ENCODE measurements at regions of chr12 and their contacts with region 1.

Region 1: DNA sequence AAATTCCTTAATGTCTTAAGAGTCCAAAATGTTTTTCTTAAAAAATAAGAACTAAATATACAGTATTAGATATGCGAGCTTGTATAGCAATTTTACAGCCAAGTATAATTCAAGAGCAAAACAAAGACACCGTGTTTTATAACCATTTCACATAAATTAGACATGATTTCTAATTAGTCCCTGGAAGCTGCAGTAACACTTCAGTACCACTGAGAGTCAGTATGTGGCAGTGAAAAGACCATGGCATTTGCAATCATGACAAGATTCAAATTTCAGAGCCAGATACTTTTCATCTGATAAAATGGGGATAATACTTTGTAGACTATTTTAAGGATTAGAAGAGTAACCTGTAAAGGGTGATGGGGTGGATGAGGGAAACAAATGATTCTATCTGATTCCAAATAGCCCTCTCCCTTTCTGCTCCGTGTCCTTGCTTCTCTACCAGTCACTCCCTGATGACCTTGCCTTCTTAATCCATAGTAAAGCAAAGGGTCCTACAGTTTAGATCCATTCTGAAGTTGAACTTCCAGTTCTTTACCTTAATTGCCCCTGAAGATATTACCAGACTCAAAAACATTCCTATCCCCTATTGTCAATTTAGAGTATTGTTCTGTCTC is 145.4 kb upstream of the ABCD2 start:
- DNase-seq: no peak
- H3K4me3 Mint-ChIP-seq: no peak overlapping the region
- H3K27ac Mint-ChIP-seq: no peak overlapping the region
- H3K4me1 Mint-ChIP-seq: no peaks in the 10 kb centered on the region
- H3K27me3 Mint-ChIP-seq: no peaks in the 10 kb centered on the region

Region 2: GRCh38 chr12:39958377-39958776 is 193.3 kb after region 1 on chr12:
- CTCF ChIA-PET with region 1: no interaction called
- intact Hi-C with region 1: loop called (anchors 1 kb)
- DNase-seq: peak; percentile 19
- H3K4me3 Mint-ChIP-seq: no peak overlapping the region
- H3K27ac Mint-ChIP-seq: no peak overlapping the region
- H3K4me1 Mint-ChIP-seq: no peaks in the 10 kb centered on the region
- H3K27me3 Mint-ChIP-seq: no peaks in the 10 kb centered on the region

Region 3: GRCh38 chr12:40152783-40153383 is 387.8 kb after region 1 on chr12:
- CTCF ChIA-PET with region 1: no interaction called
- intact Hi-C with region 1: loop called (anchors 1 kb)
- DNase-seq: peak; percentile 68
- H3K4me3 Mint-ChIP-seq: no peak overlapping the region
- H3K27ac Mint-ChIP-seq: no peak overlapping the region
- H3K4me1 Mint-ChIP-seq: no peaks in the 10 kb centered on the region
- H3K27me3 Mint-ChIP-seq: peaks cover 16% of the 10 kb centered on the region